ENCODE measurements at regions of chr10 and their contacts with region 1.

Region 1: DNA sequence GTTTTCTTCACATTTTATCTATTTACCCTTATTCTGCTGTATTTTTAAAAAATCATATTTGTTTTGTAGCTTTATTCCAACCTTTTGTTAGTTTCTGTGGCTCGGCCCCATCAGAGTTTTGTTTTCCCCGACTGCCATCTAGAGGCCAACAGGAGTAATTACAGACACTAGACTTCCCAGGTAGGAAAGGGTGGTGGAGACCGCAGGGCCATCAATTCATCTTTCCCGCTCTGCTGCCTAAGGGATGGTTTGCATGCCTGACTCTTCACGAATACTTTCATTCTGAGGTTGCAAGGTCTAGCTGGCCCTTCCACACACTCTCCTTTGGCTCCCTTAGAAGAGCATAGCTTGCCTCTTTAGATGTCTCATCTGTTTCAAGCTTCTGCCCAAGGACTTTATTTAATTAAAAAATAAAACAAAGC is 38.3 kb downstream of the LYZL2 start:
- DNase-seq: peak in 6 of 7 donors; percentile 28 to 59 (median 41)
- H3K4me3 ChIP-seq: no peak overlapping the region
- H3K27ac ChIP-seq: no peak overlapping the region
- H3K4me1 ChIP-seq: no peaks in the 10 kb centered on the region
- H3K27me3 ChIP-seq: no peaks in the 10 kb centered on the region
- CTCF ChIP-seq: peak; percentile 71 to 90 (median 84)
- POLR2A ChIP-seq: no peak

Region 2: DNA sequence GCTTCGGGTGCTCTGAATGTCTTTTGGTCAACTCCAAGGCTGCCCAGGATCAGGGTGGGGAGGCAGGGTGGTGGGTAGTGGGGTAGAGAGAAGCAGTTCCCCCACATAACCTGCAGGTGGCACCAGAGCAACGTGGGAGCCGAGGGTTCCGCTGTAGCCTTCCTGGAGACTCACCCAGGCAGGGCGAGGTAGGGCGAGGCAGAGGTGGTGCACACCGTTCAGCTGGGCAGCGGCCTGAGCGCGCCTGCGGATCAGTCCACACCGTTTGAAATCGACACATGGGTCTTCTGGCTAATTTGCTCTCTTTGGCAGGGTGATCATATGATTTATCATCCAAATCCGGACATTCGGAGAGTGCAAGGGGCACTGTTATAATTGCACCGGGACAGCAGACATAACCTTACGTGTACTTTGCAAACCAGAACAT is 198.7 kb before region 1 on chr10:
- intact Hi-C with region 1: loop called (anchors 5 kb)
- DNase-seq: peak; percentile 51 to 85 (median 77)
- H3K4me3 ChIP-seq: peak overlapping the region in 1 of 4 donors; percentile 38
- H3K27ac ChIP-seq: no peak overlapping the region
- H3K4me1 ChIP-seq: peaks cover 0 to 11% of the 10 kb centered on the region in 2 donors
- H3K27me3 ChIP-seq: no peaks in the 10 kb centered on the region
- CTCF ChIP-seq: peak; percentile 90 to 94 (median 92)
- POLR2A ChIP-seq: no peak

Region 3: GRCh38 chr10:30534465-30535144 is 56.7 kb before region 1 on chr10:
- intact Hi-C with region 1: loop called in 1 of 2 experiments (anchors 5 kb)
- DNase-seq: peak; percentile 59 to 93 (median 82)
- H3K4me3 ChIP-seq: no peak overlapping the region
- H3K27ac ChIP-seq: no peak overlapping the region
- H3K4me1 ChIP-seq: peaks cover 12 to 34% of the 10 kb centered on the region in 2 donors
- H3K27me3 ChIP-seq: no peaks in the 10 kb centered on the region
- CTCF ChIP-seq: peak; percentile 84 to 97 (median 88)
- POLR2A ChIP-seq: no peak

Region 4: GRCh38 chr10:31146491-31147209 is 555.4 kb after region 1 on chr10:
- intact Hi-C with region 1: no loop called
- DNase-seq: peak in 3 of 7 donors; percentile 18 to 38 (median 25)
- H3K4me3 ChIP-seq: no peak overlapping the region
- H3K27ac ChIP-seq: peak overlapping the region in 1 of 5 donors; percentile 30
- H3K4me1 ChIP-seq: peaks cover 0 to 8% of the 10 kb centered on the region in 2 donors
- H3K27me3 ChIP-seq: no peaks in the 10 kb centered on the region
- CTCF ChIP-seq: no peak
- POLR2A ChIP-seq: no peak